ENCODE measurements at regions of chr7 and their contacts with region 1.

Region 1: DNA sequence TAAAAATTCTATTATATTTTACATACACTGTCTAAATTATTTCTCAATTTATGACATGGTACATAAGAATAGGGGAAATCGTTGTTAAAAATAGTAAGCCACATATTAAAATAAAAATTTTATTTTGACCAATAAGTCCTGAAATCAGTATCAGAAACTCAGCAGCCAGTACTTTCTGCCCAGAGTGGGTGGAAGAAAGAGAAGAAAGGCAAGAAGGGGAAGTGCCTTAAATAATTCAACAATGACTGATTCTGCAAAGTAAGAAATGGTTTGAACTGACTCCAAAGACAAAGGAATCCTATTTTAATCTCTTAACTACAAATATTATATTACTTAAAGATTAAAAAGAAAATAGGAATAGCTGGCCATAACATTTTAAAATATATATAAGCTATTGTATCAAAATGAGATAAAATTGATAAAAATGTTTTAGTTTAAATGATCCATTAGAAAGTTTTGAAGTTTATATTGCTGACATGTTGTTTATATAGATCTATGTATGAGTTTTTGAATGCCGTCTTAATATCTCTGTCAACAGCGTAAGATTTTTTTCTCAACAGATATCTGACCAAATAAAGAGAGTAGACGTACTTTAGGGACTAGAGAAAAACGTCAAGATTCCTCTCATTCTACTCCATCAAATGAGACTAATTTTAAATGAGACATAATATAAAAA is 30.2 kb upstream of the NRCAM start:
- DNase-seq: no peak
- ATAC-seq: no peak
- H3K4me3 ChIP-seq: no peak overlapping the region
- H3K27ac ChIP-seq: no peak overlapping the region
- H3K4me1 ChIP-seq: peaks cover 15% of the 10 kb centered on the region
- H3K27me3 ChIP-seq: no peaks in the 10 kb centered on the region
- CTCF ChIP-seq: no peak
- POLR2A ChIP-seq: no peak

Region 2: GRCh38 chr7:108181073-108181985 is 305.1 kb before region 1 on chr7:
- intact Hi-C with region 1: loop called (anchors 10 kb)
- DNase-seq: no peak
- ATAC-seq: peak; percentile 64
- H3K4me3 ChIP-seq: no peak overlapping the region
- H3K27ac ChIP-seq: no peak overlapping the region
- H3K4me1 ChIP-seq: peaks cover 10% of the 10 kb centered on the region
- H3K27me3 ChIP-seq: no peaks in the 10 kb centered on the region
- CTCF ChIP-seq: peak; percentile 26 to 92 (median 74)
- POLR2A ChIP-seq: no peak